ENCODE measurements at regions of chr11 and their contacts with region 1.

Region 1: GRCh38 chr11:113796663-113797259 is 17.2 kb downstream of the CLDN25 start:
- DNase-seq: no peak
- H3K4me3 ChIP-seq: no peak overlapping the region
- H3K27ac ChIP-seq: no peak overlapping the region
- H3K27me3 ChIP-seq: no peaks in the 10 kb centered on the region
- CTCF ChIP-seq: peak; percentile 77

Region 2: DNA sequence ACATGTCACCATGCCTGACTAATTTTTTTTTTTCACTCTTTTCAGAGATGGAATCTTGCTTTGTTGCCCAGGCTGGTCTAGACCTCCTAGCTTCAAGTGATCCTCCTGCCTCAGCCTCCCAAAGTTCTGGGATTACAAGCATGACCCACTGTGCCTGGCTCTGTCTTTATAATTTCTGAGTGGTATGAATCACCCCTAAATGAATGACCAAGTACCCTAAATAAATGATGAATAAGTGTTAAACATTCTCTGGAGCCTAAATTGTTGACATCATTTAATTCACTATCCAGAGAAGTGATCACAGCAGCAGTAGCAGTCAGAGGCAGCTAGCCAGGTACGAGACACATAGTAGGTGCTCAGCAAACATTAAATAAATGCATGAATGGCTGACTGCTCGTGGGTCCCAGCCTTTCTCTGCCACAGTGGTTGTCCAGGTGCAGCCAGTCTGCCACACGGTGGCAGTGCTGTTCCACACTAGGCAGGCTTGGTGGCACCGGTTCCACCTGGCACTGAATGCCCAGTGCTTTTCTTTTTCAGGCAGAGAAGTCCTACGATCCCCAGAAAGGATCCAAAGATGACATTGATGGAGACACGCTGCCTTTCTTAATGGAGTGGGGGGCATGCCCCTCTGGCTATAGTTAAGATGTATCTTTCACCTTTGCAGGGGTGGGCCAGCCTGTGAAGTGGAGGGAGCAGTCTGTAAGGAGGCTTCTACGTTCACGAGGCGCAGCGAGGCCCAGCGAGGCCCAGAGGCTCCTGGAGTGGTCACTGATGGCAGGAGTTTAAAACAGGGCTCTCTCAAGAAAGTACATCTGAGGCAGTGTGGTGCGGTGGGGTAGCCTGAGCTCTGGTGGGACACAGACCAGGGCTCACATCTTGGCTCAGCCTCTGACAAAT is 491.1 kb before region 1 on chr11:
- CTCF ChIA-PET with region 1: interaction called, 15 read pairs
- POLR2A ChIA-PET with region 1: no interaction called
- DNase-seq: peak; percentile 21
- H3K4me3 ChIP-seq: no peak overlapping the region
- H3K27ac ChIP-seq: no peak overlapping the region
- H3K27me3 ChIP-seq: peaks cover 11% of the 10 kb centered on the region
- CTCF ChIP-seq: peak; percentile 98

Region 3: GRCh38 chr11:113773416-113774173 is 23.2 kb before region 1 on chr11 and contains the start of gene ZW10:
- CTCF ChIA-PET with region 1: interaction called, 14 read pairs
- POLR2A ChIA-PET with region 1: no interaction called
- DNase-seq: peak; percentile 93
- H3K4me3 ChIP-seq: peak within 1 kb of the TSS; percentile 97
- H3K27ac ChIP-seq: peak within 1 kb of the TSS; percentile 63
- H3K27me3 ChIP-seq: peaks cover 7% of the 10 kb centered on the region
- CTCF ChIP-seq: peak; percentile 92
- polyA plus RNA-seq, gene ZW10: 12.5 and 14.9 TPM in 2 replicates

Region 4: DNA sequence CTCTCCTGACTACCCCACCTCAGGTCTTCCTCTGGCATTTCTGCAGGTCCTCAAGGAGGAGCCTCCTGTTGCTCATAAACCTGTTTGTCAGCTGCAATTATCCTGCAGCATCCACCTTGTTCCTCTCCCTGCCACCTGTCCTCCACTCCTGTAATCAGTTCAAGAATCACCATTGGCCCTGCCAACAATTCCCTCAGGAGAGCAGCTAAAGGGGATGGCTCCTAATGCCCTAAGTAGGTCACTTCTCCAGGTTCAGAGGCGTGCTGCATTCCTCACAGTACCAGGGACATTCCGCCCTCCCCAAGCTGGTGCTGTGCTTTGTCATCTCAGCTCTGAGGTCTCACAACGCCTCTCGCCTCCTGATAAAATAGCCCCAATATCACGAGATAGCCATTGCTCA is 15.1 kb before region 1 on chr11:
- CTCF ChIA-PET with region 1: interaction called, 14 read pairs
- POLR2A ChIA-PET with region 1: no interaction called
- DNase-seq: no peak
- H3K4me3 ChIP-seq: no peak overlapping the region
- H3K27ac ChIP-seq: no peak overlapping the region
- H3K27me3 ChIP-seq: peaks cover 7% of the 10 kb centered on the region
- CTCF ChIP-seq: no peak

Region 5: GRCh38 chr11:113818426-113818825 is 21.7 kb after region 1 on chr11:
- CTCF ChIA-PET with region 1: interaction called, 11 read pairs
- POLR2A ChIA-PET with region 1: no interaction called
- DNase-seq: no peak
- H3K4me3 ChIP-seq: no peak overlapping the region
- H3K27ac ChIP-seq: no peak overlapping the region
- H3K27me3 ChIP-seq: no peaks in the 10 kb centered on the region
- CTCF ChIP-seq: no peak

Region 6: DNA sequence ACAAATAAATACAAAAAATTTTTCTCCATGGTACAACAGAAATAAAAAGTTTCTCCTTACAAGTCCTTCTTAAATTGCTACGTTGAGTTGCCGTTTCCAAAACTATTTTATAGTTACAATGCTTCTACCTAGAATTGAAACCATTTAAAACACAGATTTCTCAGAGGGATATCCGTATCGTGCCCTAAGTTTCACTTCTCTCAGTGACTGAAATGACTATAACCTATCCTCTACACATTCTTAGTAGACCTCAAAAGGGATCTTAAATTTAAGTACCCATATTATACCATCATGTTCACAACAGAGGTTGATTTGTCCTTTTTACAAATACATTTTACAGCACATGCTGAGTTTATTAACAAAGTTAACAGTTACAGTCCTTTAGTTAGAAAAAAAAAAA is 34.6 kb after region 1 on chr11:
- CTCF ChIA-PET with region 1: interaction called, 23 read pairs
- POLR2A ChIA-PET with region 1: no interaction called
- DNase-seq: no peak
- H3K4me3 ChIP-seq: no peak overlapping the region
- H3K27ac ChIP-seq: no peak overlapping the region
- H3K27me3 ChIP-seq: no peaks in the 10 kb centered on the region
- CTCF ChIP-seq: no peak

Region 7: DNA sequence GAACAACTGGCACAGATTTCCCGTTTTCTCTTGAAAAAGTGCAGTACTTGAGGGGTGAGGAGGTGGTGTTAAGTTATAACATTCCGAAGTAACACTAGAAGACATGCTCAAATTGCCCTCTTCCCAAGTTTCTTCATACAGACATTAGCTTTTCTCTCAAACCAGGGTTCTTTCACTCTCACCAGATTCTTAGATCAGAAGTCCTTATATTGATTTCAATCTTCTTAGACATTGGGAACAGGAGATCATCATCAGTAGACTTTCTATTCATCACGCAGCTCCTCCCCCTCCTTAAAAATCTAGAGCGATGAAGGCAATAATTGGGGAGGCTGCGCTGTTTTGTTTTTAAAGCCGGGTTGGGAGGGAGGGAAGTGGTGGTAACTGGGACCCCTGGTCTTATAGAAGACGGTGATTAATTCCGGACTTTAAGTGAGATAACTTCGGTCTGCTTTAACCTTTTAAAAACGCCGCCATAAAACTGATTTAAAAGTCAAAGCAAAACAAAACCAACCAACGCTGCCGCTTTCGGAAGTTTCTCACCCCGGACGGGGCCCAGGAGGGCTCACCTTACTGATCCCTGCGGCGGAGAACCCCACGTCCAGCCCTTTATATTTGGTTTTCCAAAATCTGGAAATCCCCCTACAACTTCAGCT is 77.9 kb after region 1 on chr11:
- CTCF ChIA-PET with region 1: no interaction called
- POLR2A ChIA-PET with region 1: no interaction called
- DNase-seq: no peak
- H3K4me3 ChIP-seq: peak overlapping the region; percentile 71
- H3K27ac ChIP-seq: no peak overlapping the region
- H3K27me3 ChIP-seq: no peaks in the 10 kb centered on the region
- CTCF ChIP-seq: no peak

Region 8: DNA sequence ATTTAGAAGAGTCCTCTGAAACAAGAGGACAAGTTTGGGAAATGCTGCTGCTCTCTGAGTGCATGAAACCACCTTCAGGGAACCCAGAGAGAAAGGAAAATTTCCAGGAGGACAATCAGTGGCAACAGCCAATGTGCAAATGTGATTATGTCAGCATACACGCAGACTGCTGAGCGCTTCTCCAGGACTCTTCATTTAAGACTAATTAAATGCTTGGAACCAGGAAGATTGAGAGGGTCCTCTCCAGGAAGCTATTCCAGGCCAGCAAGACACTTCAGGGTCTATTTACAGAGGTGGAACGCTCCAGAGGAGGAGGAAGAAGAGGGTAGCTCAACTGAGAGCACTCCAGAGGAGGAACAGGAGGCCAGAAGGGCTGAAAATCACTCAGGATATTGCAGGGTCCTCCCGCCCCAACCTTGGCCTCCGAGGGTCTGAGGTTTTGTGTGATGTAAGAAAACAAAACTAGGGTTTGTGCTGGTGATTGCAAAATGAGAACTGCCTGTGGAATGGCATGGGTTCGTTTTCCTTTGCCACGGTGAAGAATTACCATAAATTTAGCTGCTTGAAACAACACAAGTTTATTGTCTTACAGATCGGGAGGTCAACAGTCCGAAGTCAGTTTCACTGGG is 164.1 kb after region 1 on chr11:
- CTCF ChIA-PET with region 1: no interaction called
- POLR2A ChIA-PET with region 1: no interaction called
- DNase-seq: no peak
- H3K4me3 ChIP-seq: no peak overlapping the region
- H3K27ac ChIP-seq: no peak overlapping the region
- H3K27me3 ChIP-seq: no peaks in the 10 kb centered on the region
- CTCF ChIP-seq: no peak